ENCODE measurements at regions of chr13 and their contacts with region 1.

Region 1: DNA sequence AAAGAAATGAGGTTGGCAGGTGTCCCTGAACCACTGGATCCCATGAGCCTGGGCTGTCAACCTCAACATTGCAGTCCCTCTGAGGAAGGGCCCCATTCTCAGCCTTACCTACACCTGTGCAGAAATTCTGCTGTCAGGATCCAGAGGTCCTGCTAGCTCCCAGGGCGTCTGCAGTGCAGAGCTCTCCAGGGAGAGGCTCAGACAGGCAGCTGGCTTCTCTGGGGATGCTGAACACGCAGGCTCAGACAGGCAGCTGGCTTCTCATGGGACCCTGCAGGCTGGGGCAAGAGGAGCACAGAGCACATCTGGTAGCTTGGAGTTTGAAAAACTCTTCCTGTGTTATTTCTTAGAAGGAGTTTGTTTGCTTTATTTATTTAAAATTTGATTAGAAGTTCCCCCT is 50.9 kb downstream of the TMEM255B start:
- DNase-seq: no peak
- ATAC-seq: no peak
- H3K4me3 ChIP-seq: no peak overlapping the region
- H3K27ac ChIP-seq: no peak overlapping the region
- H3K4me1 ChIP-seq: peaks cover 0 to 15% (median 10%) of the 10 kb centered on the region in 9 donors
- H3K27me3 ChIP-seq: no peaks in the 10 kb centered on the region
- CTCF ChIP-seq: no peak

Region 2: DNA sequence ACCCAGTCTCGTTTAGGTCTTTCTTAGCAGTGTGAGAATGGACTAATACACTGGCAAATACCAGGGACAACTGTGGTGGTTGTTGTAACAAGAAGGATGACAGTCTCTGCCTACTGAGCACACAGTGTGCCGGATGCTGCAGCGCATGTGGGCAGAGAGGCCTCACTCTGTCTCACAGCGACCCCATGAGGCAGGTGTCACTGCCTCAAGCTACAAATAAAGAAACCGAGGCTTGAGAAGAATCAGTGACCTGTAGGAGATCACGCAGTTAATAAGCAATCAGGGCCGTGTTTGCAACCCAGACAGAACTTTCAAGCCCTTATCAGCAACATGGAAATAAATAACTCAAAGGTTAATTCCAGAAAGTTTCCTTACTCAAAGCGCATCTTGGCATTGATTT is 94.5 kb after region 1 on chr13:
- intact Hi-C with region 1: loop called in 5 of 10 experiments (anchors 2 to 5 kb)
- DNase-seq: peak; percentile 62 to 68
- ATAC-seq: peak; percentile 82 to 96 (median 92)
- H3K4me3 ChIP-seq: no peak overlapping the region
- H3K27ac ChIP-seq: no peak overlapping the region
- H3K4me1 ChIP-seq: peaks cover 0 to 16% (median 0%) of the 10 kb centered on the region in 9 donors
- H3K27me3 ChIP-seq: peaks cover 0 to 19% (median 0%) of the 10 kb centered on the region in 7 donors
- CTCF ChIP-seq: peak; percentile 61 to 85 (median 74)